PC-9 (cell line): ENCODE measurements at regions of chr5 and their contacts with region 1.

Region 1: GRCh38 chr5:139197710-139198669 is at the start of gene SIL1:
- DNase-seq: peak; percentile 78 to 95
- H3K4me3 ChIP-seq: peak within 1 kb of the TSS; percentile 84
- H3K27ac ChIP-seq: peak within 1 kb of the TSS; percentile 65
- H3K4me1 ChIP-seq: peaks cover 15% of the 10 kb centered on the region
- H3K27me3 ChIP-seq: no peaks in the 10 kb centered on the region
- CTCF ChIP-seq: no peak
- total RNA-seq, gene SIL1: 40.4 and 46.5 TPM in 2 replicates

Region 2: GRCh38 chr5:138985256-138985655 is 212.7 kb before region 1 on chr5:
- CTCF ChIA-PET with region 1: no interaction called
- POLR2A ChIA-PET with region 1: interaction called, 12 read pairs
- intact Hi-C with region 1: no loop called
- DNase-seq: peak; percentile 34 to 61
- H3K4me3 ChIP-seq: no peak overlapping the region
- H3K27ac ChIP-seq: peak overlapping the region; percentile 21; the same call in 1 of the 2 replicates
- H3K4me1 ChIP-seq: 0 out of 2 replicates have a peak, but pooled peaks cover 7% of the 10 kb centered on the region
- H3K27me3 ChIP-seq: no peaks in the 10 kb centered on the region
- CTCF ChIP-seq: no peak

Region 3: DNA sequence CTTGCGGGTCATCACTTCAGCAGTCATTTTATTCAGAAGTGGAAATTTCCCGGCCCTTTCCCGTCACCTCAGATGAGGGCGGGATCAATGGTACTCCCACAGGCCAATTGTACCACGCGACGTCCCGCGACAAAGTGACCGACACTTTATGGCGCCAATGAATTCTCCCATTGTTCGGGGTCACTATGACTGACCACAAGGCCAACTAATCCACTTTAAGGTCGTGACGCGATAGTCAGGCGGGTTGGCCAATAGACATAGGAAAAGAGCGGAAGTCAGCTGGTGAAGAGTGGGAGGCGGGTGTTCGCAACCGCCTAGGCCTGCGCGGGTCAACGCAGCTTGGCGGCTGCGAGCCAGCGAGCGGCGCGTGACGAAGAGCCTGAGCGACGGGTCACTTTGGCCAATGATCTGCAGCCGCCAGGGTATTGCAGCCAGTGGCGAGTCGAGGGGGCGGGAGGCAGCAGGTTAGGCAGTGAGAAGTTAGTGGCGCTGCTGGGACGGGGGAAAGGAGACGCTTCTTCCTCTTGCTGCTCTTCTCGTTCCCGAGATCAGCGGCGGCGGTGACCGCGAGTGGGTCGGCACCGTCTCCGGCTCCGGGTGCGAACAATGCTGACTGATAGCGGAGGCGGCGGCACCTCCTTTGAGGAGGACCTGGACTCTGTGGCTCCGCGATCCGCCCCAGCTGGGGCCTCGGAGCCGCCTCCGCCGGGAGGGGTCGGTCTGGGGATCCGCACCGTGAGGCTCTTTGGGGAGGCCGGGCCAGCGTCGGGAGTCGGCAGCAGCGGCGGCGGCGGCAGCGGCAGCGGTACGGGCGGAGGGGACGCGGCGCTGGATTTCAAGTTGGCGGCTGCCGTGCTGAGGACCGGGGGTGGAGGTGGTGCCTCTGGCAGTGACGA is 1203.6 kb after region 1 on chr5 and contains the start of gene ANKHD1:
- CTCF ChIA-PET with region 1: no interaction called
- POLR2A ChIA-PET with region 1: interaction called, 14 read pairs
- intact Hi-C with region 1: no loop called
- DNase-seq: peak; percentile 98 to 99
- H3K4me3 ChIP-seq: peak within 1 kb of the TSS; percentile 89
- H3K27ac ChIP-seq: peak within 1 kb of the TSS; percentile 83
- H3K4me1 ChIP-seq: peaks cover 37% of the 10 kb centered on the region
- H3K27me3 ChIP-seq: no peaks in the 10 kb centered on the region
- CTCF ChIP-seq: no peak
- total RNA-seq, gene ANKHD1: 90.7 and 109 TPM in 2 replicates